Right ventricle myocardium inferior (tissue), 1 donor: ENCODE measurements at regions of chr11 and their contacts with region 1.

Region 1: GRCh38 chr11:44029977-44030911 is 17.5 kb upstream of the ACCSL start:
- DNase-seq: no peak
- ATAC-seq: peak; percentile 76

Region 2: GRCh38 chr11:43779306-43779705 is 250.9 kb before region 1 on chr11:
- intact Hi-C with region 1: no loop called
- DNase-seq: no peak
- ATAC-seq: no peak

Region 3: GRCh38 chr11:43987384-43988039 is 42.7 kb before region 1 on chr11:
- intact Hi-C with region 1: loop called (anchors 2 kb)
- DNase-seq: peak; percentile 93
- ATAC-seq: peak; percentile 94